CD4-positive, alpha-beta memory T cell (primary cell): ENCODE measurements at regions of chr17 and their contacts with region 1.

Region 1: GRCh38 chr17:82668631-82669099 is 20.4 kb upstream of the WDR45B start:
- DNase-seq: no peak
- H3K4me3 ChIP-seq: no peak overlapping the region
- H3K4me3 Mint-ChIP-seq: peak overlapping the region in 1 of 8 donors; percentile 51
- H3K27ac ChIP-seq: no peak overlapping the region
- H3K27ac Mint-ChIP-seq: peak overlapping the region in 1 of 7 donors; percentile 48
- H3K4me1 ChIP-seq: no peaks in the 10 kb centered on the region
- H3K4me1 Mint-ChIP-seq: peaks cover 5 to 9% (median 6%) of the 10 kb centered on the region in 4 donors
- H3K27me3 ChIP-seq: no peaks in the 10 kb centered on the region
- H3K27me3 Mint-ChIP-seq: no peaks in the 10 kb centered on the region

Region 2: GRCh38 chr17:82273327-82274133 is 395.1 kb before region 1 on chr17 and contains the start of gene CSNK1D:
- CTCF ChIA-PET with region 1: no interaction called
- POLR2A ChIA-PET with region 1: no interaction called
- intact Hi-C with region 1: no loop called
- DNase-seq: peak; percentile 88 to 94 (median 90)
- H3K4me3 ChIP-seq: peak within 1 kb of the TSS; percentile 47 to 76
- H3K4me3 Mint-ChIP-seq: peak within 1 kb of the TSS; percentile 91 to 96 (median 94)
- H3K27ac ChIP-seq: peak within 1 kb of the TSS; percentile 80
- H3K27ac Mint-ChIP-seq: peak within 1 kb of the TSS; percentile 92 to 100 (median 98)
- H3K4me1 ChIP-seq: peaks cover 50% of the 10 kb centered on the region
- H3K4me1 Mint-ChIP-seq: peaks cover 31 to 53% (median 40%) of the 10 kb centered on the region in 4 donors
- H3K27me3 ChIP-seq: no peaks in the 10 kb centered on the region
- H3K27me3 Mint-ChIP-seq: no peaks in the 10 kb centered on the region
- total RNA-seq, gene CSNK1D: 182 TPM

Region 3: GRCh38 chr17:82775001-82775823 is 106.5 kb after region 1 on chr17:
- CTCF ChIA-PET with region 1: interaction called, 5 read pairs
- POLR2A ChIA-PET with region 1: no interaction called
- intact Hi-C with region 1: loop called (anchors 2 kb)
- DNase-seq: peak in 1 of 5 donors; percentile 31
- H3K4me3 ChIP-seq: no peak overlapping the region
- H3K4me3 Mint-ChIP-seq: peak overlapping the region in 2 of 8 donors; percentile 29 to 69
- H3K27ac ChIP-seq: no peak overlapping the region
- H3K27ac Mint-ChIP-seq: peak overlapping the region in 2 of 7 donors; percentile 41 to 77
- H3K4me1 ChIP-seq: peaks cover 9% of the 10 kb centered on the region
- H3K4me1 Mint-ChIP-seq: peaks cover 6 to 11% (median 11%) of the 10 kb centered on the region in 4 donors
- H3K27me3 ChIP-seq: no peaks in the 10 kb centered on the region
- H3K27me3 Mint-ChIP-seq: no peaks in the 10 kb centered on the region

Region 4: GRCh38 chr17:83076930-83077329 is 408.3 kb after region 1 on chr17:
- CTCF ChIA-PET with region 1: no interaction called
- POLR2A ChIA-PET with region 1: no interaction called
- intact Hi-C with region 1: no loop called
- DNase-seq: no peak
- H3K4me3 ChIP-seq: no peak overlapping the region
- H3K4me3 Mint-ChIP-seq: peak overlapping the region in 5 of 8 donors; percentile 5 to 34 (median 15)
- H3K27ac ChIP-seq: no peak overlapping the region
- H3K27ac Mint-ChIP-seq: peak overlapping the region in 3 of 7 donors; percentile 6 to 32 (median 14)
- H3K4me1 ChIP-seq: peaks cover 15% of the 10 kb centered on the region
- H3K4me1 Mint-ChIP-seq: peaks cover 7 to 16% (median 11%) of the 10 kb centered on the region in 4 donors
- H3K27me3 ChIP-seq: no peaks in the 10 kb centered on the region
- H3K27me3 Mint-ChIP-seq: no peaks in the 10 kb centered on the region